B cell (primary cell): ENCODE measurements at regions of chr10 and their contacts with region 1.

Region 1: GRCh38 chr10:48608279-48608681 is 3.4 kb upstream of the ARHGAP22 start:
- DNase-seq: peak; percentile 74
- ATAC-seq: peak; percentile 85
- H3K4me3 ChIP-seq: no peak overlapping the region
- H3K4me3 Mint-ChIP-seq: no peak overlapping the region
- H3K27ac ChIP-seq: no peak overlapping the region
- H3K27ac Mint-ChIP-seq: no peak overlapping the region
- H3K4me1 ChIP-seq: peaks cover 23 to 27% of the 10 kb centered on the region in 2 donors
- H3K4me1 Mint-ChIP-seq: peaks cover 30% of the 10 kb centered on the region
- H3K27me3 ChIP-seq: peaks cover 0 to 16% (median 4%) of the 10 kb centered on the region in 4 experiments
- H3K27me3 Mint-ChIP-seq: peaks cover 13% of the 10 kb centered on the region
- CTCF ChIP-seq: peak; percentile 83

Region 2: DNA sequence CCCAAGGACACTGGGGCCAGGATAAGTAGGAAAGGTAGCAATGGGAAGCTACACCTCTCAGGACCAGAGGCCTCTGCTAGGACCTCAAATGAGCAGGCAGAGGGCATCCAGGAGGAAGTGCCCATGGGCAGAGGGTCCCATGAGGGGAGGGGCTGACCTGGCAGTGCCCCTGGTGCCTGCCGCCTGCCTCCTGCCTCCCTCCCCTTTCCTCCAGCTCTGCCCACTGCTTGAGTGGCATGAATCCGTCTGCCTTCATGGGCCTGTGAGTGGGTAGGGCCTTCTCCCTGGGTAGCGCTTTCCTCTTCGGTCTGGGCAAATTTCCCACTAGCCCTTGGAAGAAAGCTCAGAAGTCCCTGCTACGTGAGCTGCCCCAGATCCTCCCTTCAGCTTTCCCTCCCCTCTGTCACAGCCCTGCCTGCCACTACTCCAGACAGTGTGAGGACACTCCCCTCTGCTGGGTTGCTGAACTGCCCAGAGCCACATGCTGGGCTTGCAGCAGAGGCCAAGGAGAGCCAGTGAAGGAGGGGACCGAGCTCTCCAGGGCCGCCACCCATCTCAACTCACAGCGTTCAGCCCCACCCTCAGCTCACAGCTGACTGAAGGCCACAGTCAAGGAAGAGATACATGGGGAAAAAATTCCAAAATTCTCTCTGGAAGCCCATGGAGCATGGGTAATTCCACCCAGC is 144.8 kb before region 1 on chr10:
- CTCF ChIA-PET with region 1: no interaction called
- POLR2A ChIA-PET with region 1: no interaction called
- intact Hi-C with region 1: no loop called
- DNase-seq: no peak
- ATAC-seq: no peak
- H3K4me3 ChIP-seq: no peak overlapping the region
- H3K4me3 Mint-ChIP-seq: no peak overlapping the region
- H3K27ac ChIP-seq: no peak overlapping the region
- H3K27ac Mint-ChIP-seq: no peak overlapping the region
- H3K4me1 ChIP-seq: no peaks in the 10 kb centered on the region
- H3K4me1 Mint-ChIP-seq: no peaks in the 10 kb centered on the region
- H3K27me3 ChIP-seq: no peaks in the 10 kb centered on the region
- H3K27me3 Mint-ChIP-seq: no peaks in the 10 kb centered on the region
- CTCF ChIP-seq: no peak

Region 3: GRCh38 chr10:48551861-48552591 is 56.3 kb before region 1 on chr10:
- CTCF ChIA-PET with region 1: interaction called, 183 read pairs
- POLR2A ChIA-PET with region 1: no interaction called
- intact Hi-C with region 1: loop called (anchors 1 kb)
- DNase-seq: peak; percentile 79
- ATAC-seq: peak; percentile 82
- H3K4me3 ChIP-seq: no peak overlapping the region
- H3K4me3 Mint-ChIP-seq: no peak overlapping the region
- H3K27ac ChIP-seq: no peak overlapping the region
- H3K27ac Mint-ChIP-seq: no peak overlapping the region
- H3K4me1 ChIP-seq: peaks cover 10 to 13% of the 10 kb centered on the region in 2 donors
- H3K4me1 Mint-ChIP-seq: peaks cover 14% of the 10 kb centered on the region
- H3K27me3 ChIP-seq: peaks cover 0 to 6% (median 0%) of the 10 kb centered on the region in 4 experiments
- H3K27me3 Mint-ChIP-seq: peaks cover 7% of the 10 kb centered on the region
- CTCF ChIP-seq: peak; percentile 94

Region 4: DNA sequence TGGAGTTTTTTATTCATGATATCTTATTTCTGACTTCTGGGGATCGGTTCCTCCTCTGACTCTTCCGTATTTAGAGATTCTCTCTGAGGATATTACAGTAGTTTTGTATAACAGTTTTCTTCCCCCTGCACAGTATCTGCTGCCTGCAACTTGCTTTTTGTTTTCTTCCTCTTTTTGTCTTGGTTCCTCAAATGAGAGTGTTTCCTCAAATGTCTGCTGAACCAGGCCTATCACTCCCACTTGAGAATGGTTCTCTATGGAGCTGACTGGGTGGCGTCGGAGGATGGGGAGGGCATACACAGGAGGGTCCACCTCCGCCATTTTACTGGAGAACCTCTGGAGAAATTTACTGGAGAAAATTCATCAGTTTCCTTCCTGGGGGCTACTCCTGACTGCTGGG is 31.1 kb before region 1 on chr10:
- CTCF ChIA-PET with region 1: interaction called, 44 read pairs
- POLR2A ChIA-PET with region 1: interaction called, 3 read pairs
- intact Hi-C with region 1: loop called (anchors 1 kb)
- DNase-seq: peak; percentile 82
- ATAC-seq: peak; percentile 69
- H3K4me3 ChIP-seq: no peak overlapping the region
- H3K4me3 Mint-ChIP-seq: peak overlapping the region; percentile 58
- H3K27ac ChIP-seq: peak overlapping the region; percentile 91 to 94
- H3K27ac Mint-ChIP-seq: peak overlapping the region; percentile 85
- H3K4me1 ChIP-seq: peaks cover 73 to 85% of the 10 kb centered on the region in 2 donors
- H3K4me1 Mint-ChIP-seq: peaks cover 93% of the 10 kb centered on the region
- H3K27me3 ChIP-seq: no peaks in the 10 kb centered on the region
- H3K27me3 Mint-ChIP-seq: no peaks in the 10 kb centered on the region
- CTCF ChIP-seq: no peak

Region 5: DNA sequence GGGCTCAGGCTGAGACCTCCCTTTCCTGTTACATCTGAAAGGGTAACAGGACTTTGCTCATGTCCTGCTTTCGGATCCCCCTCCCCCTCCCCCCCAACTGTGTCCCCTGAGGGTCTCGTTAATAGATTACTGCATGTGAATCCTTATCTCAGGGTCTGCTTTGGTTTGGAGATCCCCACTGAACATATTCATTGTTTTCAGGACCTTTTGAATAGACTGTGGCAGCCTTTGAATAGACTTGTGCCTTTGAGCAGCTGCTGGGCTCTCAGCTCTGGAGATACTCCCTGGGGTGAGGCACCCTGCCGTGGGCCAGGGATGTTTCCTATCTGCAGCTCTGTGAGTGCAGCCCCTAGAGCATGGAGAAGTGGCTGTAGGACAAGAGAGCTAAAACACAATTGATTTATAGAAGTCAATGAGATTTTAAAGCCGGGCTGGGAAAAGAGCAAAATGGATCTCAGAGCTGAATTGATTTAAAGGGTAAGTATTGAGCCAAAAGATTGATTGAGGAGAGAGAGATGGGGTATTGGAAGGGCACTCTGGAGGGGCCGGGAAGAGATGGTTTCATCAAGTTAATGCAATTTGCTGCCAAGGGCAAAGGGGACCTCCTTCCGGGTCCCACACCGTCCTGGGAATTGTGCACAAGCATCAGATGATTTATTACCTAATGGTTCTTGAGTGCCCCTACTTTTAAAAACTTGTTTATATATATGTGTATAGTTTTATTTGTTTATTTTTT is 13.3 kb before region 1 on chr10:
- CTCF ChIA-PET with region 1: interaction called, 30 read pairs
- POLR2A ChIA-PET with region 1: no interaction called
- intact Hi-C with region 1: no loop called
- DNase-seq: no peak
- ATAC-seq: no peak
- H3K4me3 ChIP-seq: no peak overlapping the region
- H3K4me3 Mint-ChIP-seq: no peak overlapping the region
- H3K27ac ChIP-seq: no peak overlapping the region
- H3K27ac Mint-ChIP-seq: no peak overlapping the region
- H3K4me1 ChIP-seq: no peaks in the 10 kb centered on the region
- H3K4me1 Mint-ChIP-seq: no peaks in the 10 kb centered on the region
- H3K27me3 ChIP-seq: no peaks in the 10 kb centered on the region
- H3K27me3 Mint-ChIP-seq: peaks cover 4% of the 10 kb centered on the region
- CTCF ChIP-seq: no peak

Region 6: GRCh38 chr10:48634198-48634983 is 26.1 kb after region 1 on chr10:
- CTCF ChIA-PET with region 1: interaction called, 53 read pairs
- POLR2A ChIA-PET with region 1: interaction called, 3 read pairs
- intact Hi-C with region 1: loop called (anchors 2 kb)
- DNase-seq: peak; percentile 86
- ATAC-seq: peak; percentile 100
- H3K4me3 ChIP-seq: peak overlapping the region in 2 of 5 experiments; percentile 7 to 25
- H3K4me3 Mint-ChIP-seq: peak overlapping the region; percentile 80
- H3K27ac ChIP-seq: no peak overlapping the region
- H3K27ac Mint-ChIP-seq: peak overlapping the region; percentile 47
- H3K4me1 ChIP-seq: peaks cover 37 to 40% of the 10 kb centered on the region in 2 donors
- H3K4me1 Mint-ChIP-seq: peaks cover 42% of the 10 kb centered on the region
- H3K27me3 ChIP-seq: peaks cover 0 to 31% (median 16%) of the 10 kb centered on the region in 4 experiments
- H3K27me3 Mint-ChIP-seq: peaks cover 33% of the 10 kb centered on the region
- CTCF ChIP-seq: no peak